ENCODE measurements at regions of chr14 and their contacts with region 1.

Region 1: GRCh38 chr14:81400852-81401251 is 728 bp upstream of the STON2 start:
- DNase-seq: peak; percentile 99
- ATAC-seq: peak; percentile 77
- H3K4me3 ChIP-seq: peak overlapping the region; percentile 58
- H3K27ac ChIP-seq: peak overlapping the region; percentile 99
- H3K4me1 ChIP-seq: peaks cover 51% of the 10 kb centered on the region
- H3K27me3 ChIP-seq: no peaks in the 10 kb centered on the region
- CTCF ChIP-seq: no peak

Region 2: DNA sequence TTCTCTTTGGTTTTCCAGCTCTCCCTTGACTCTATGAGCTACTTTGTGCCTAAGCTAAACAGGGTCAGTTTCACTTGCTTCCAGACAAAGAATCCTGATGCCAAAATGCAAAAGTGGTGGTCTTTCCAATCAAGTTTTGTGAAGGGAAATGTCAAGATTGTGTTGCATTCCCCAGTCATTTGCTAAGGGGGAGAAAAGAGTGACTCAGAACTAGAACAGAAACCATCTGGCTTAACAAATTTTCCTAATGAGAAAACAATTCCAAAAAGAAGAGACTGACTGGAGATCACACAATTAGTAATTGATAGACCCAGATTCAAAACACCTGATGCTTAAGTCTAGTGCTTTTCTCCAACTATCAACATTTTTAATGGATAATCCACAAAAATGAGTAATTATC is 954.5 kb before region 1 on chr14:
- CTCF ChIA-PET with region 1: no interaction called
- POLR2A ChIA-PET with region 1: no interaction called
- intact Hi-C with region 1: no loop called
- DNase-seq: no peak
- ATAC-seq: no peak
- H3K4me3 ChIP-seq: no peak overlapping the region
- H3K27ac ChIP-seq: no peak overlapping the region
- H3K4me1 ChIP-seq: peaks cover 5% of the 10 kb centered on the region; the same call in 1 of the 2 replicates
- H3K27me3 ChIP-seq: no peaks in the 10 kb centered on the region
- CTCF ChIP-seq: no peak

Region 3: DNA sequence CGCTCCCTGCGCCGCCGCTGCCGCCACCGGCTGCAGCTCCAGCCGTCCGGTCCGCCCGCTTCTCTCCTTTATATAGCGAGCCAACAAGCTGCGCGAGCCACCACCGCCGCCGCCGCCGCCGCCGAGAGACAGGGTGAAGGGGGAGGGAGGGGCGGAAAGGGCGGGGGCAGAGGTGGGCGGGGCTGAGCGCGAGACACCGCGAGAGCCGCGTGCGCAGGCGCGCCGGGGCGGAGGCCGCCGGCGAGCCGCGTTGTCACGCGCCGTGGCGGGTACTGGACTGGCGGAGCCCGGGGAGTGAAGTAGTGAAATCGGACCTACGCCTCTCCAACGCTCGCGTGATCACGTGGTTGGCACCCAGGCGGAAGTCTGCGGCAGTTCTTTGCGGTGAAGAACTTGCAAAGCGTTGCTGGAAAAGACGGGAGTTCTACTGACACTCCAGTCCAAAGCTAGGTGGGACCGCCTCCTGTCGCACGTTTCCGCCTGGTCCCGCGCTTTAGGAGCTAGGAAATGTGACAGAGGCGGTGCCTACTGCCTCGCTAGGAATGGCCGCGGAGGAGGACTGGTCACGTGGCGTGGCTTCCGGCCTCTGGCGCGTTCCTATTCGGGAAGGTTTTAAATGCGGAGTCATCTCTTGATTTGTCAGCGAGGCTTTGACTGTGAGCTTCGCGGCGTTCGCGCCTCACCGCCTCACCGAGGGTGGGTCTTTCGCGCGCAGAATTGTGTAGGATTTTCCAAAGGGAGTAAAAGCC is 179.8 kb before region 1 on chr14 and contains the start of gene GTF2A1:
- CTCF ChIA-PET with region 1: no interaction called
- POLR2A ChIA-PET with region 1: no interaction called
- intact Hi-C with region 1: loop called (anchors 1 kb)
- DNase-seq: peak; percentile 95
- ATAC-seq: peak; percentile 75
- H3K4me3 ChIP-seq: peak within 1 kb of the TSS; percentile 97
- H3K27ac ChIP-seq: peak within 1 kb of the TSS; percentile 97
- H3K4me1 ChIP-seq: peaks cover 23% of the 10 kb centered on the region
- H3K27me3 ChIP-seq: no peaks in the 10 kb centered on the region
- CTCF ChIP-seq: no peak
- total RNA-seq, gene GTF2A1: 20.7 and 24.4 TPM in 2 replicates

Region 4: GRCh38 chr14:81303248-81304221 is 97.3 kb before region 1 on chr14:
- CTCF ChIA-PET with region 1: no interaction called
- POLR2A ChIA-PET with region 1: no interaction called
- intact Hi-C with region 1: loop called (anchors 1 kb)
- DNase-seq: peak; percentile 97
- ATAC-seq: peak; percentile 98
- H3K4me3 ChIP-seq: no peak overlapping the region
- H3K27ac ChIP-seq: peak overlapping the region; percentile 69
- H3K4me1 ChIP-seq: peaks cover 22% of the 10 kb centered on the region
- H3K27me3 ChIP-seq: no peaks in the 10 kb centered on the region
- CTCF ChIP-seq: no peak

Region 5: GRCh38 chr14:81341370-81341769 is 59.5 kb before region 1 on chr14:
- CTCF ChIA-PET with region 1: no interaction called
- POLR2A ChIA-PET with region 1: no interaction called
- intact Hi-C with region 1: loop called (anchors 2 kb)
- DNase-seq: no peak
- ATAC-seq: no peak
- H3K4me3 ChIP-seq: no peak overlapping the region
- H3K27ac ChIP-seq: no peak overlapping the region
- H3K4me1 ChIP-seq: peaks cover 10% of the 10 kb centered on the region
- H3K27me3 ChIP-seq: no peaks in the 10 kb centered on the region
- CTCF ChIP-seq: no peak

Region 6: GRCh38 chr14:81436296-81437138 is 35.7 kb after region 1 on chr14:
- CTCF ChIA-PET with region 1: interaction called, 4 read pairs
- POLR2A ChIA-PET with region 1: interaction called, 6 read pairs
- intact Hi-C with region 1: loop called (anchors 1 kb)
- DNase-seq: peak; percentile 87
- ATAC-seq: peak; percentile 93
- H3K4me3 ChIP-seq: peak overlapping the region; percentile 72
- H3K27ac ChIP-seq: no peak overlapping the region
- H3K4me1 ChIP-seq: peaks cover 13% of the 10 kb centered on the region
- H3K27me3 ChIP-seq: peaks cover 18% of the 10 kb centered on the region; the same call in 1 of the 2 replicates
- CTCF ChIP-seq: no peak

Measured in PC-3 (cell line).